Heart left ventricle (tissue), 16 donors: ENCODE measurements at regions of chr16 and their contacts with region 1.

Region 1: DNA sequence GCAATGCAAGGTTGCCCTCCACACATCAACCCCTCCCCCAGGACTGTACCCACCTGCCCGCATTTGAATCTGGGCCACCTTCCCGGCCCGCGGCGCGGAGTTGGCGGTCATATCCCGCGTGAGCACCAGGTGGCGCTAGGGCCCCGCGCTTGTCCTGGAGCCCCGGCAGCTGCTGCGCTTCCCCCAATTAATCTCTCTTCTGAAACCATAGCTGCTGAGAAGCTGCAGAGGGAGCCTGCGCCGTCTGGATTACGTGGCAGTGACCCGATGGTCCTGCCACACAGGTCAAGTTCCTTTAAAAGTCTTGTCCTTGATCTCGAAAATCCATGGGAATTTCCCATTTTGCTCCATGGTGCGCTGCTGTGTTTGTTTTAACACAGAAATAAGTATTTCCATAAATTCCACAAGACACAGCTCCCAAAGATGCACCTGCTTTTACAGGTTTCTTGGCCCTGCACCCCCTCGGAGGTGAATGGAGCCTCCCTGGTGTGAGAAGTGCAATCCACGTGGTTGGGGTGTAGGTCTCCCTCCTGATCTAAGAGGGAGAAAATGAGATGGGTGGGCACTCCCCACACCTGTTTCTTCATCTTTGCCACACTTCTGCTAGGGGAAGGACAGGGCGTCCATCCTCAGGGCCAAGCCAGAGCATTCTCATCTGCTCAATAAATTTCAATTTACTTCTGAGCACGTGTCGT is 22.1 kb downstream of the COX4I1 start:
- DNase-seq: peak; percentile 74 to 91 (median 75)
- ATAC-seq: peak; percentile 59 to 91 (median 88)
- H3K4me3 ChIP-seq: no peak overlapping the region
- H3K27ac ChIP-seq: no peak overlapping the region
- H3K4me1 ChIP-seq: peaks cover 0 to 13% (median 0%) of the 10 kb centered on the region in 12 donors
- H3K27me3 ChIP-seq: peaks cover 0 to 24% (median 4%) of the 10 kb centered on the region in 9 donors
- CTCF ChIP-seq: peak; percentile 93 to 99 (median 97)
- POLR2A ChIP-seq: no peak

Region 2: GRCh38 chr16:85767569-85767968 is 54.0 kb before region 1 on chr16:
- intact Hi-C with region 1: no loop called
- DNase-seq: no peak
- ATAC-seq: no peak
- H3K4me3 ChIP-seq: no peak overlapping the region
- H3K27ac ChIP-seq: no peak overlapping the region
- H3K4me1 ChIP-seq: no peaks in the 10 kb centered on the region
- H3K27me3 ChIP-seq: peaks cover 0 to 10% (median 0%) of the 10 kb centered on the region in 9 donors
- CTCF ChIP-seq: no peak
- POLR2A ChIP-seq: no peak

Region 3: DNA sequence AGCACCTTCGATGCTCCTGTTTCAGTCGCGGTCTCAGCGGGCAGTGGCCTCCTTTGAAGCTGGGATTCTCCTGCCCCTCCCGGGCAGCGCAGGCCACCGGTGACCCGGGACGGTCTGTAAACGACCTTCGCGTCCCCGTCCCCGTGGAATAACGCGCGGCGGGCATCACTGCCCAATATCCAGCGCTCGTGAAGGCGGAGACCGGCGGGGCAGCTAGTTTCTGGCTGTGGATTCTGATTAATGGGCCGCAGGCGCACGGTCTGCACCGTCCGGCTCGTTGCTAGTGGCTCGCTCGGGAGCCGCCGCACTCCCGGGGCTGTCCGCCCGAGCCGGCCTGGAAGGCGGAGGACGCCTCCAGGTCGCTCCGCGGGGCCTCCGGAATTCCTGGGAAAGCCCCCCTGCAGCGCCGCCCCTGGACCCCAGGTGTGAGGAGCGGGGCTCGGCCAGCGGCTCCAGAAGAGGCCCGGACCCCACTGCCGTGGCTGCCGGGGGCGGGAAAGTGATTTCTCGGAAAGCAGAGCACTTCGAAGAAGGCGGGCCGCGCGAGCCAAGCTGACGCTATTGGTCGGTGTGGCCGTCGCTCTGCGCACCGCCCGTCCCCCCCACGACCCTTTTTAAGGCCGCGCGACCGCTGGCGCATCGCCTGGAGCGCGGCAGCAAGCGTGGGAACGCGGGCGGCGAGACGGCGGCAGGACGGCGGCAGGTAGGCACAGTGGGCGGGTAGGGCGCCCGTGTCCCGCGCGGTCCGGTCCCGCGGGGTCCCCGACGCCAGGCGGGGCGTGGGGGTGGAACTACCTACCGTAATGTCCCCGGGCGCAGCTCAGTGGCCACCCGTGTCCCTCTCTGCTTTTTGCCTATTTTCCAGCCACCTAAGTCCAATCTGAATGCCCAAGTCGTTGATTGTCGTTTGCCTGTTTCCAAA is 77.2 kb after region 1 on chr16 and contains the start of gene IRF8:
- intact Hi-C with region 1: loop called in 1 of 10 experiments (anchors 5 kb)
- DNase-seq: peak; percentile 75 to 91 (median 80)
- ATAC-seq: peak in 3 of 4 donors; percentile 79 to 94 (median 90)
- H3K4me3 ChIP-seq: peak within 1 kb of the TSS; percentile 36 to 84 (median 64)
- H3K27ac ChIP-seq: peak within 1 kb of the TSS in 8 of 12 donors; percentile 7 to 89 (median 42)
- H3K4me1 ChIP-seq: peaks cover 0 to 59% (median 13%) of the 10 kb centered on the region in 12 donors
- H3K27me3 ChIP-seq: peaks cover 0 to 73% (median 16%) of the 10 kb centered on the region in 9 donors
- CTCF ChIP-seq: no peak
- POLR2A ChIP-seq: peak in 1 of 2 donors; percentile 59
- total RNA-seq, gene IRF8: 1.8 to 31.8 (median 3.8) TPM

Region 4: GRCh38 chr16:85986931-85987749 is 165.6 kb after region 1 on chr16:
- intact Hi-C with region 1: loop called (anchors 1 to 10 kb)
- DNase-seq: no peak
- ATAC-seq: peak in 3 of 4 donors; percentile 5 to 30 (median 15)
- H3K4me3 ChIP-seq: peak overlapping the region in 5 of 12 donors; percentile 5 to 28 (median 18)
- H3K27ac ChIP-seq: no peak overlapping the region
- H3K4me1 ChIP-seq: peaks cover 0 to 46% (median 0%) of the 10 kb centered on the region in 12 donors
- H3K27me3 ChIP-seq: peaks cover 0 to 59% (median 15%) of the 10 kb centered on the region in 9 donors
- CTCF ChIP-seq: peak in 11 of 12 donors; percentile 25 to 66 (median 42)
- POLR2A ChIP-seq: no peak

Region 5: DNA sequence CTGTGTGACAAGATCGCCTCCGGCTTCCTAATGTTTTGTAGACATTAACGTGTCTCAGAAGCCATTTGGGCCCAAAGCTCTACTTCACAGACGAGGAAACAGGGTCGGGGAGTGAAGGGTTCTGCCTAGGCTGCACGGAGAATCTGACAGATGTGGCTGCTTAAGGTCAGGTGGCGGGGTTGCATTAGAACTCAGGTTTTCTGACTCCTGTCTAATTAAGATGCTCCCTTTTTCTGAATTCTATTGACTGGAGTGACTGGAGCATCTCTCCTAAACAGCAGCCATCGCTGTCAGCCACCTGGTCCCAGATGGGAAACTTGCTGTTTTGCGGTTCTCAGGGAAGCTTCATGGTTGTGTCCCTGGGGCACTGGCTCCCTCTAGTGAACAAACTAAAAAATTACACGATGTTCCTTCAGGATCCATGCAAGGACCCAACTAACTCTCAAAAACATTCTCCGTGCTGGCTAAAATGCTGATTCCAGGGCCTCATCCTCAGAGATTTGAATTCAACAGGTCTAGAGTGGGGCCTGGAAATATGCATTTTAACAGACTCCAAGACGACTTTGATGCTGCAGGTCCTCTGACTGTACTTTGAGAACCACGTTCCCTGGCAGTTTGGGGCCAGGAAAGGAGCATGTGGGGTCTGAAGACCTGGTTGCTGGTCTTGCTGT is 194.7 kb after region 1 on chr16:
- intact Hi-C with region 1: loop called (anchors 1 to 2 kb)
- DNase-seq: peak in 2 of 5 donors; percentile 24 to 45
- ATAC-seq: peak in 1 of 4 donors; percentile 72
- H3K4me3 ChIP-seq: no peak overlapping the region
- H3K27ac ChIP-seq: no peak overlapping the region
- H3K4me1 ChIP-seq: peaks cover 0 to 4% (median 0%) of the 10 kb centered on the region in 12 donors
- H3K27me3 ChIP-seq: peaks cover 0 to 37% (median 12%) of the 10 kb centered on the region in 9 donors
- CTCF ChIP-seq: peak; percentile 57 to 88 (median 76)
- POLR2A ChIP-seq: no peak

Region 6: DNA sequence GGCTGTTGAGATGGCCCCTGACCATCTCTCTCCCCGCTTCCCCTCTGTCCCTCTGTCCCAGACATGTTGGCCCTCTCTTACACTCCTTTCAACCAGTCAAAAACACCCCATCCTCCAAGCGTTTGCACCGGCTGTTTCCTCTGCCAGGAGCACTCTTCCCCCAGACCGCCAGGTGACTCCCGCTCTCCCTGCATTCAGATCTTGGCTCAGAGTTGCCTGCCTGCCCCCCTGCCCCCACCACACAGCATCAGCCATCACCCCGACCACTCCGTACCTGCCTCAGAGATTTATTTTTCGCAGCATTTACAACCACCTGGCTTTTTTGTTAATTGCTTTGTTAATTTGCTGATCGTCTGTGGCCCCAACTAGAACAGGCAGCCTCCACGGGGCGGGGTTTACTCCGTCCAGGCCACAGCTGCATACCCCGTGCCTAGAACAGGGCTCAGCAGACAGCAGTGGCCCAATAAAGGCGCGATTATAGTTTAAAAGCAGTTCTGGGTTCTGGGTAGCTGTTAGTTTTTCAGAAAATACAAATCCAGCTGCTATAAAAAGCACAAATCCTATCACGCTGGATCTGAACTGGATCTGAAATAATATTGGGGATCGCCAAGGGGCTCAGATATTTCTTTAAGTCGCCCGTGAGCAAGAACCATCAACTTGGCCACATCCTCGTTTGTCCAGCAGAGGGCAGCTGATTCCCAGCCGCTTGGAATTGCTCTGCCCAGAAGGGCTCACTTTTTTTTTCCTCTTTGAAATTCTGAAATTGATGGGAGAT is 250.9 kb after region 1 on chr16:
- intact Hi-C with region 1: loop called in 1 of 10 experiments (anchors 5 kb)
- DNase-seq: peak in 4 of 5 donors; percentile 52 to 70 (median 52)
- ATAC-seq: peak in 2 of 4 donors; percentile 60 to 73
- H3K4me3 ChIP-seq: no peak overlapping the region
- H3K27ac ChIP-seq: no peak overlapping the region
- H3K4me1 ChIP-seq: no peaks in the 10 kb centered on the region
- H3K27me3 ChIP-seq: peaks cover 0 to 58% (median 7%) of the 10 kb centered on the region in 9 donors
- CTCF ChIP-seq: peak; percentile 68 to 86 (median 77)
- POLR2A ChIP-seq: no peak

Region 7: GRCh38 chr16:86519649-86520316 is 698.2 kb after region 1 on chr16:
- intact Hi-C with region 1: loop called in 9 of 10 experiments (anchors 2 to 10 kb)
- DNase-seq: peak; percentile 29 to 85 (median 57)
- ATAC-seq: peak; percentile 11 to 53 (median 47)
- H3K4me3 ChIP-seq: peak overlapping the region in 3 of 12 donors; percentile 1 to 16 (median 8)
- H3K27ac ChIP-seq: peak overlapping the region in 1 of 12 donors; percentile 17
- H3K4me1 ChIP-seq: peaks cover 0 to 27% (median 10%) of the 10 kb centered on the region in 12 donors
- H3K27me3 ChIP-seq: peaks cover 30 to 94% (median 75%) of the 10 kb centered on the region in 9 donors
- CTCF ChIP-seq: peak; percentile 85 to 97 (median 92)
- POLR2A ChIP-seq: no peak